ENCODE measurements at regions of chr14 and their contacts with region 1.

Region 1: DNA sequence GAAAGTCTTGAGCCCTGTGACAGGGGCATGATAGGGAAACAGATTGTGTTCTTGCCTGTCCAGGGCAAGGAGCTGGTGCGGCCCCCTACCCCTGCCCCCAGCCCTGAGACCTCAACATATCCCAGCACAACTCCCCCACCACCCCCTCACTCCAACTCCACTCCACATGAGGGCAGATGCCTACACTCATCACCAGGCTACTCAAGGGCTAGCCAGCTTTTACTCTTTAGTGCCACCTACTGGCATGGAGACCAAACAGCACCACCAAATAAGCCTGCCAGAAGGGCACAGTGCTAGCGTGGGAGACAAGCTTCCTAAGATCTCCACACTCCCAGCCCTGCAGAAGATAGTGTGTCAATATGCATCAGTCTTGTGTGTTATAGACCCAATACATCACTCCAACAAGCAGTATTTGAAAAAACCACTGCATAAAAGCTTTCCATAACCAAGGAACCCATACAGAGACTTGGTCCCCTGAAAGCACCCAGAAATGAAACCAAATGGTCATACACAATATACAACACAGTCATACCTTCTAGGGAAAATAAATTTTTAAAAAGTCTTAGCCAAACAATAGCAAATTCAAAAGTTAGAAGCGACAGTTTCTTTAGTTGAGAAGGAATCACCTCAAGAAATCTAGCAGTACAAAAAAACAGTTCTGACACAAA is 154.4 kb downstream of the KCNK10 start:
- DNase-seq: peak; percentile 64
- H3K4me3 Mint-ChIP-seq: no peak overlapping the region
- H3K27ac Mint-ChIP-seq: no peak overlapping the region
- H3K4me1 Mint-ChIP-seq: peaks cover 3% of the 10 kb centered on the region
- H3K27me3 Mint-ChIP-seq: peaks cover 8% of the 10 kb centered on the region

Region 2: GRCh38 chr14:87888229-87888999 is 280.2 kb before region 1 on chr14:
- CTCF ChIA-PET with region 1: interaction called, 5 read pairs
- POLR2A ChIA-PET with region 1: no interaction called
- intact Hi-C with region 1: loop called (anchors 1 kb)
- DNase-seq: peak; percentile 59
- H3K4me3 Mint-ChIP-seq: no peak overlapping the region
- H3K27ac Mint-ChIP-seq: no peak overlapping the region
- H3K4me1 Mint-ChIP-seq: no peaks in the 10 kb centered on the region
- H3K27me3 Mint-ChIP-seq: no peaks in the 10 kb centered on the region

Region 3: DNA sequence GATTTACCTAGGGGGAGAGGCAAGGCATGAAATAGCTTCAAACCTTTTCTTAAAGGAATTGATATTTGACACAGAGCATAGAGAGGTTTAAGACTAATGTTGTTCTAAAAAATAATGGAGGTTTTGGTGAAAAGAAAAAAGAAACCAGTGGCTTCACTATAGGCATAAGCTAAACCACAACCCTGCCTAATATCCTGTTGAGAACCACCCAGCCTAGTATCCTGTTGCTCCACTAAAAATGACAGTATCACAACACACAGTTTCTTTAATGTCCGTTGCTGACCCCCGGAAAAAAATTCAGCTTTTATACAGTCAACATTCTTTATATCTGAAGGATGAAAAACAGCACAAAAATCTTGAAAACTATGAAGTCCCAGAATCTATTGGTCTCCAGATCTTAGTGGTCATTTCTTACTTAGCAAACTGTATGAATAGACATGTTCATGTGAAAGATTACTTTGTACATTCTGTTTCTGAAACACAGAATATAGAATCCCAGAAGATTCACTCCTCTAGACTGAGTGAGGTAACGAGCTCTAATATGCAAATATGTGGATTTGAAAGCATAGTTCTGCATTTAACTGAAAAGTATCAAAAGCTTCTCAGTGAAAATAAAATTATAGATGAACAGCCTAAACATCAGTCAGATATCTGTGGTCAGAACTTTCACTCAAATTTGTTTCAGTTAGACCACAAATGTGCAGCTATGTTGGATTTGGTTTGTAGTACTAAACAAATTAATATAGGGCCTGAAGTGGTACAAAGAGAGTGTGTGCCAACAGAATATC is 216.1 kb before region 1 on chr14:
- CTCF ChIA-PET with region 1: interaction called, 71 read pairs
- POLR2A ChIA-PET with region 1: interaction called, 3 read pairs
- intact Hi-C with region 1: no loop called
- DNase-seq: no peak
- H3K4me3 Mint-ChIP-seq: no peak overlapping the region
- H3K27ac Mint-ChIP-seq: peak overlapping the region; percentile 62
- H3K4me1 Mint-ChIP-seq: peaks cover 21% of the 10 kb centered on the region
- H3K27me3 Mint-ChIP-seq: no peaks in the 10 kb centered on the region

Region 4: GRCh38 chr14:88013750-88014349 is 154.8 kb before region 1 on chr14:
- CTCF ChIA-PET with region 1: interaction called, 76 read pairs
- POLR2A ChIA-PET with region 1: no interaction called
- intact Hi-C with region 1: loop called (anchors 1 kb)
- DNase-seq: peak; percentile 48
- H3K4me3 Mint-ChIP-seq: no peak overlapping the region
- H3K27ac Mint-ChIP-seq: no peak overlapping the region
- H3K4me1 Mint-ChIP-seq: peaks cover 56% of the 10 kb centered on the region
- H3K27me3 Mint-ChIP-seq: no peaks in the 10 kb centered on the region

Region 5: DNA sequence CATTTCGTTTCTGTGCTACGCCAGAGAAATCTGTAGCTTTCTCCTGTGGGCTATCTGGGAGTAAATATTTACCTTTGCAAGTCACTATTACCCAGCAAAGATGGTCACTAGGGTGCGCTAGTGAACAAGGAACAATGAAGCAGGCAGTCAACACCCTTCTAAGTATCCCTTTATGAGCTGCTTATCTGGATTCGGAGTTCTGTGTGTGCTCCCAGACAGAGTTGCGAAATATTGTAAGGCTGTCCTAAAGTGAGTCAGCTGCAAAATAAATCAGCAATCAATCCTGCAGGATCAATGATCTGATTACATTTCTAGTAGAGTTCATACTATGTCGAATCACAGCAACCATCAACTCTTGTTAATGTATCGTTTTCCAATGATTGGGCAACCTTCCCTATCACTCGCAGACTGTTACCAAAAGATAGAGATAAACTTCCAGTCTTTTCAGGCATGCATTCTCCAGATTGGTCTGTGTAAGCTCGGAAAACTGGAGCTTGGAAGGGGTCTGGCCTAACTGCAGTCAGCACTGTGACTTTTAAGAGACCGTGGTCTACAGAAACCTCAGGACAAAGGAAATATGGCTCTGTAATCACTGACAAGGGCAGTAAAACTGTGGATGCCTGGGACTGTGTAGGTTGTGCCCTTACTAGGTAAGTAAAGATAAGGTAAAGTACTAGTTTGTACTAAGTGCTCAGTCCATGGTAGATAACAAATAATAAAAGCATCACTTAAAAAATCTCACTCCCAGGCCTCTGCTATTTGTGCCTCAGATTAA is 21.0 kb after region 1 on chr14:
- CTCF ChIA-PET with region 1: interaction called, 18 read pairs
- POLR2A ChIA-PET with region 1: interaction called, 3 read pairs
- intact Hi-C with region 1: no loop called
- DNase-seq: peak; percentile 64
- H3K4me3 Mint-ChIP-seq: no peak overlapping the region
- H3K27ac Mint-ChIP-seq: no peak overlapping the region
- H3K4me1 Mint-ChIP-seq: peaks cover 4% of the 10 kb centered on the region
- H3K27me3 Mint-ChIP-seq: peaks cover 20% of the 10 kb centered on the region